Dendritic cell treated with granulocyte-macrophage colony-stimulating factor and Interleukin-4, amounts not matched to agents 40 ng/mL and 50 ng/mL, for 4 days (primary cell): ENCODE measurements at regions of chr10 and their contacts with region 1.

Region 1: DNA sequence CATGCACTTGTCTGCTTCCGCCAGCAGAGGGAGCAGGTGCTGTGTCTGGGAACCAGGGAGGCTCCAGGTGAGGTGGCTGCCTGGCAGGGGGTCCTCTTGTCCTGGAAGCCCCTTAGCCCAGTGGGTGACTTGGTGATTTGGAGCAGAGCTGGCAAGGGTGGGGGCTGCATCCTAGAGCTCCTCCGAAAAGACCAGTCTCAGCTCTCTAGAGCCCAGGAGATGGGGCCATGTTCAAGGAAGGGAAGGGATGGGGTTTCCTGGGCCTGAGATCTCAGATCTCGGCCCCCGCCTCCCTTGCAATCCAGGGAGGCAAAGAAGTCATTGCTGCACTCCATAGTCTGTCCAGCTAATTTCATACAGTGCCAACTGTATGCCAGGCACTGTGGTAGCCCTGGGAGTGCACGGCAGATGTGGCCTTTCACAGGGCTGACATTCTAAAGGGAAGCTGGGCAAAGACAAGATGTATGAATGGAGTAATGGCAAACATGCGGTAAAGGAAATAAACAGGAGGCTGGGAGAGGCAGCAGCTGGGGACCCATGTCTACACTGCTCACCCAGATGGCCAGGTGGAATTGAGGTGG is 20.4 kb upstream of the SFRP5 start:
- H3K4me3 Mint-ChIP-seq: no peak overlapping the region
- H3K27ac Mint-ChIP-seq: no peak overlapping the region
- H3K4me1 Mint-ChIP-seq: no peaks in the 10 kb centered on the region
- H3K27me3 Mint-ChIP-seq: peaks cover 42% of the 10 kb centered on the region

Region 2: DNA sequence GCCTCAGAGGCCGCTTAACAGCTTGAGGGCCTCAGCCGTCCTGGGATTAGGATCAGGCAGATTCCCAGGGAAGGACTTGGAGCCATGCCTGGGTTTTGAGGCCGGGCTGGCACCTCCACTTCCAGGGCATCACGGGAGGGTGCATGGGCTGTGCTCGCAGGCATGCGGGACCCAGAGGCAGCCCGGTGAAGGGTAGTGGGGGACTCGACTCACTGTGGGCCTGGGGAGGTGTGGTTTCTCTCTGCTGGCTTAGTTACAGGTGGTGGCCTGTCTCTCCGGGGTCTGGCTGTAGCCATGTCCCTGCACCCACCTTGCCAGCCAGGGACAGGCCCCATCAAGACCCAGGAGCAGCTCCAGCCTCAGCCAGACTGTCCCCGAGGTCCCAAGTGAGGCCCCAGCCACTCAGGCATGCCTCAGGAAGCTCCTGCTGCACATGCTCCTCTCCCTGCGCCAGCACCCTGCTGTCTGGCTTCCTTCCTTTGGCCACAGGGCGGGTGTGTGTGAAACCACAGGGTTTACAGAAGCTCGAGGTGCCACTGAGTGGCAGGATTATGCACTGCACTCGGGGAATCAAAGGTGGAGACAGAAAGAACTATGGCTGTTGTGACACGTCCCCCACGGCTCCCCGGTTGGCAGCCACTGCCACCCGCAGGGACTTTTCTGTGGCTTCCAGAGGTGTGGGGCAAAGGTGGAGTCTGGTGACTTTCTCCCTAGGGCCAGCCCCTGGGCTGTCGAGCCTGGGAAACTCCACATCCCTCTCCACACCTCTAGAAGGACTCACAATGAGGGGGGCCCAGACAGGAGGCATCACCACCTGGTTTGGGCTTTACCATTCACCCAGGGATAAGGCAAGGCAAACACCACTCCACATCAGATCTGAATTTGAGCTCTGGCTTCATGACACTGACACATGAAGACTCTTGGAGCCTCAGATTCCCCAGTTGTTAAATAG is 77.1 kb after region 1 on chr10:
- intact Hi-C with region 1: loop called (anchors 1 kb)
- H3K4me3 Mint-ChIP-seq: no peak overlapping the region
- H3K27ac Mint-ChIP-seq: no peak overlapping the region
- H3K4me1 Mint-ChIP-seq: peaks cover 7% of the 10 kb centered on the region
- H3K27me3 Mint-ChIP-seq: peaks cover 14% of the 10 kb centered on the region

Region 3: DNA sequence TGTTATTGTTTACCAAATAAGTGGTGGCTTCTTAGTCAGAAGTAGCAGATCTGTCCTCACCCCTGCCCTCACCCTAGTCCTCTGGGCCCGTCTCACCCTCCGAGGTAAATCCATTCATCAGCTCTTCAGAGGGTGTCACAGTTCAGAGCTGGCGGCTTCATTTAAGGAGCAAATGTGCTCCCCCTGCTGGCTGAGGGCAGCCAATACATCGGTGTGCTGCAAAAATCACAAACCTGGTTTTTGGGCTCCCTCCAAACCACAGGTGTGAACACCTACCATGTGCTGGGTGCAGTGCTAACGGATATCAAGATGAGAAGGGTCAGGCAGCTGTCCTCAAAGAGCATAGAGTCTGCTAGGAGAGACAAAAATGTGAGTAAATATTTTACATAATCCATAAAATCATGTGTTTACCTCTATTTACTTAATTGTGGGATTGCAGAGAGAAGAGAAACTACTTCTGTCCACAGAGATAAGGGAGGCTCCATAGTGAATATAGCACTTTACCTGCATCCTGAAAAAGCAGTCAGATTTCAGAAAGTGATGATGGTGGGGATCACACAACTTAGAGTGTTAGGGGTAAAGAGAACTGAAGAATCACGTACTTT is 253.7 kb after region 1 on chr10:
- intact Hi-C with region 1: loop called (anchors 10 kb)
- H3K4me3 Mint-ChIP-seq: no peak overlapping the region
- H3K27ac Mint-ChIP-seq: no peak overlapping the region
- H3K4me1 Mint-ChIP-seq: no peaks in the 10 kb centered on the region
- H3K27me3 Mint-ChIP-seq: peaks cover 33% of the 10 kb centered on the region